ENCODE measurements at regions of chr15 and their contacts with region 1.

Region 1: DNA sequence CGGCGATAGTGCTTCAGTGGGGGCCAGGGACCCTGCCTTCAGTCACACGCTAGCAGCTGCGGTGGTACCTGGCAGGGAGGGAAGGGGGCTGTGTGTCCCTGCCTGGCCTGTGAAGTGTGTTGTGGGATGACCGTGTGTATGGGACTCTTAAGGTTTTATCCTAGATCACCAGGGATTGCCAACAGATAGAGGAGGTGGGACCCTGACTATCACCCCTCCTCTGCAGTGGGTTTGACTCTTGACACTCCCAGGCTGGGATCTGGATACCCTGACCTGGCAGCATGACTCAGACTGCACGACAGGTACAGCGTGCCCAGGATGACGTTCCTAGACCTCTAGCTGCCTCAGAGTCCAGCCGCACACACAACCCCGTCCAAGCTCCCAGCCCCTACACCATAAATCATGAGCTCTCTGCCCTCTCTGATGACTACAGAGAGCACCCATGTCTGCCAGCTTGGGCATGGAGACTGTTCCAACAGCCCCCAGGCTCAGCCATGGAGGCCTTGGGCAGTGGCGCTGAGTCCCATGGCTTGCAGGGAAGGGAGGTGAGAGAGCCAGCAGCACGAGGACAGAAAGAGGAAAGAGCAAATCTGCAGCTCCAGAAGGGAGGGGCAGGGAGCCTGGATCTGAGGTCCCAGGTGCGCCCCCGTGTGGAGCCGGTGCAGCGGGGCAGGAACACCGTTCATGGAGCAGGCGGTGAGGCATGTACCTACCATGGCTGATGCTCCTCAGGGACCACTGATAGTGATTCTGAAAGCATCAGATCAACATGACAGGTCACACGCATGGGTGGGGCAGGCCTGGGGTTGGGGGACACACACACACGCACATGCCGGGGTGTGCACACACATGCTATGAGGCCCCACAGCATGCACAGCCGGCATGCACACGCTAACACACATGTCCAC is 71.0 kb downstream of the ADAMTS7 start:
- DNase-seq: peak; percentile 95
- ATAC-seq: peak; percentile 68
- H3K4me3 Mint-ChIP-seq: no peak overlapping the region
- H3K27ac Mint-ChIP-seq: no peak overlapping the region
- H3K4me1 Mint-ChIP-seq: peaks cover 22% of the 10 kb centered on the region
- H3K27me3 Mint-ChIP-seq: no peaks in the 10 kb centered on the region; the same call in 1 of the 2 replicates
- CTCF ChIP-seq: peak; percentile 71

Region 2: GRCh38 chr15:78565097-78565951 is 174.9 kb before region 1 on chr15 and contains the start of gene CHRNA5:
- CTCF ChIA-PET with region 1: interaction called, 16 read pairs
- POLR2A ChIA-PET with region 1: no interaction called
- DNase-seq: peak; percentile 100
- ATAC-seq: peak; percentile 96
- H3K4me3 Mint-ChIP-seq: peak within 1 kb of the TSS; percentile 90
- H3K27ac Mint-ChIP-seq: peak within 1 kb of the TSS; percentile 80
- H3K4me1 Mint-ChIP-seq: peaks cover 23% of the 10 kb centered on the region
- H3K27me3 Mint-ChIP-seq: no peaks in the 10 kb centered on the region; the same call in 1 of the 2 replicates
- CTCF ChIP-seq: no peak
- total RNA-seq, gene CHRNA5: 21.0 to 23.3 TPM (median 21.2 TPM) in 3 replicates

Region 3: DNA sequence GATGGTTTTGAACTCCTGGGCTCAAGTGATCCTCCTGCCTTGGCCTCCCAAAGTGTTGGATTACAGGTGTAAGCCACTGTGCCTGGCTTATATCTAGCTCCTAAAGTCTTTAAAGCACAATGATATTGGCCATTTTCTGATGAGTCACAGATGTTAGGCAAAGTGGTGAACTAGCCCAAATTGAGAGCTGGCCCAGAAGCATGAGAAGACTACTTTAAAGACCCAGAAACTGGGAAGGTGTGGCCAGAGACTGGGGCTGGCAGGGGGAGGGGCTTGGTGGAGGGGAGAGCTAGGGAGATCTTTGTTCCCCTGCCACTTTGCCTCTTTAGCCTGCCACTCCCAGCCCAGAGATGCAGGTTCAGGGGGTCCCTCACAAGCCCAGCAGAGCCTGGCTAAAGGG is 141.1 kb before region 1 on chr15:
- CTCF ChIA-PET with region 1: no interaction called
- POLR2A ChIA-PET with region 1: no interaction called
- DNase-seq: no peak
- ATAC-seq: peak; percentile 63
- H3K4me3 Mint-ChIP-seq: no peak overlapping the region
- H3K27ac Mint-ChIP-seq: no peak overlapping the region
- H3K4me1 Mint-ChIP-seq: no peaks in the 10 kb centered on the region
- H3K27me3 Mint-ChIP-seq: peaks cover 1% of the 10 kb centered on the region; the same call in 1 of the 2 replicates
- CTCF ChIP-seq: no peak

Region 4: DNA sequence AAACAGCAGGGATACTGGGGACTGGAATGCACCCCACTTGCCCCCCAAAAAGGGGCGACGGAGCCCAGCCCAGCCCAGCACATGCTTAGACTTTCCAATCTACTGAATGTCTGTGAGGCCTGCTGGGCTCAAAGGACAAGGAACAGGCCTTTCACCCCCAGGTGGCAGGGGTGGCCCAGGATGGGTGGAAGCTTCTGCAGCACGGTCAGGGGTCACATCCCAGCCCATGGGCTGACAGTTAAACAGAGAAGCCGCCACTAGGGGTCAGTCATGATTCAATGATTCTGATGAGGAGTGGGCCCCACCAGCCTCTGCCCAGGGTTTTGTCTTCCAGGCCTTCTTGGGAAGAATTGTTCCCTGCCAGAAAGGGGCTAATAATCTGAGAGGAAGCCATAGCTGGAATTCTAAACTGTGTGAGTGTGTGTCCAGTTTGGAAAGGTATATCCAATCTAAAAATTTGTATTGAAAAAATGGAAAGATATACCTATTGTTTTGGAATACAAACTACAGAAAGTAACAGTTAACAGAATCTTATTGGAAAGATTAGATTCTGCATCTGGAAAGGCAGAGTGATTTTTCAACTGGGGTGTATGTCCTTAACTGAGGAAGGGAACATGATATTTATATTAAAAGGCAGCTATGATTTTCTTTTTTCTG is 101.5 kb before region 1 on chr15:
- CTCF ChIA-PET with region 1: interaction called, 64 read pairs
- POLR2A ChIA-PET with region 1: no interaction called
- DNase-seq: peak; percentile 91
- ATAC-seq: peak; percentile 62
- H3K4me3 Mint-ChIP-seq: no peak overlapping the region
- H3K27ac Mint-ChIP-seq: no peak overlapping the region
- H3K4me1 Mint-ChIP-seq: peaks cover 19% of the 10 kb centered on the region
- H3K27me3 Mint-ChIP-seq: peaks cover 11% of the 10 kb centered on the region
- CTCF ChIP-seq: peak; percentile 59; the same call in 1 of the 2 replicates

Region 5: GRCh38 chr15:78750566-78750965 is 10.3 kb after region 1 on chr15:
- CTCF ChIA-PET with region 1: interaction called, 25 read pairs
- POLR2A ChIA-PET with region 1: no interaction called
- DNase-seq: no peak
- ATAC-seq: no peak
- H3K4me3 Mint-ChIP-seq: peak overlapping the region; percentile 58
- H3K27ac Mint-ChIP-seq: no peak overlapping the region
- H3K4me1 Mint-ChIP-seq: peaks cover 4% of the 10 kb centered on the region
- H3K27me3 Mint-ChIP-seq: no peaks in the 10 kb centered on the region
- CTCF ChIP-seq: no peak

Measured in WTC11 (cell line).